GM10248 (cell line): ENCODE measurements at regions of chr4 and their contacts with region 1.

Region 1: GRCh38 chr4:1266881-1267763 is 18.2 kb upstream of the CTBP1 start:
- DNase-seq: no peak
- CTCF ChIP-seq: no peak

Region 2: GRCh38 chr4:1055721-1056590 is 211.2 kb before region 1 on chr4:
- CTCF ChIA-PET with region 1: no interaction called
- POLR2A ChIA-PET with region 1: no interaction called
- DNase-seq: peak; percentile 68
- CTCF ChIP-seq: no peak

Region 3: DNA sequence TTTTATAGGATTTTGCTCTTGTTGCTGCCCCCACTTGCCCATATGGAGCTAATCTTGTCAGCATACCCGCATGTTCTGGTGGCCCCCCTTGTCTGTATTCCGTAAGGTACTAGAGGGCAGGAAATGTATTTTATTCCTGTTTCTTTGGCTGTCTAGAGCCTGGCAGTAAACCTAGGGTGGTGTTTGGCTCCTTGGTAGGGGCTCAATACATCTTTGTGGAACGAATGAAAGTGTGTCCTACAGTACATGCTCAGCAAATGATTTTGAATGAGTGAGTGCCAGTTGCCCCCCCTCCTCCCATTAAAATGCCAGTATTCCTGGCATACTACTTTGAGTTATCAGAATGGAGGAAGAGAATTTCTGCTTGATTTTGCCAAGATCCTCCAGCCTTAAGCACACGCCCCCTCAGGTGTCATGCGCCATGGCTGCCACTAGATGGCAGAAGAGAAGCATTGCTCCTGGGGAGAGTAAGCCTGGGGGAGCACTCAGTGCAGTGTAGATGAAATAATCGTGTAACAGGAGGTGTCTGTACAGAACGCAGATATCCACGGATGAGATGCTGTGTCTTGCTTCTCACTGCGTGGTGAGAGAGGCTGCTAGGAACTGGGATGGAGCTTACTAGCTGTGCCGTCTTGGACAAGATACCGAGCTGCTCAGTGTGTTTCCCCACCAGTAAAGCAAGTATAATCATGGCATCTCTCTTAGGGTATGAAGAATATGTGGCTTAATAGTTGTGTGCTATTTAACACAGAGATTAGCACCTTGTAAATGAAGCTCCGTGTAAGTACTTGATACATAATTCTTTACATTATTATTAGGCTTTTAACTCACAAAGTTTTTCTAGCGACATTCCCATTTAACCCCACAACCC is 136.6 kb before region 1 on chr4:
- CTCF ChIA-PET with region 1: interaction called, 45 read pairs
- POLR2A ChIA-PET with region 1: no interaction called
- DNase-seq: peak; percentile 76
- CTCF ChIP-seq: peak; percentile 99

Region 4: GRCh38 chr4:1167247-1167949 is 99.7 kb before region 1 on chr4:
- CTCF ChIA-PET with region 1: interaction called, 30 read pairs
- POLR2A ChIA-PET with region 1: no interaction called
- DNase-seq: peak; percentile 89
- CTCF ChIP-seq: peak; percentile 87

Region 5: DNA sequence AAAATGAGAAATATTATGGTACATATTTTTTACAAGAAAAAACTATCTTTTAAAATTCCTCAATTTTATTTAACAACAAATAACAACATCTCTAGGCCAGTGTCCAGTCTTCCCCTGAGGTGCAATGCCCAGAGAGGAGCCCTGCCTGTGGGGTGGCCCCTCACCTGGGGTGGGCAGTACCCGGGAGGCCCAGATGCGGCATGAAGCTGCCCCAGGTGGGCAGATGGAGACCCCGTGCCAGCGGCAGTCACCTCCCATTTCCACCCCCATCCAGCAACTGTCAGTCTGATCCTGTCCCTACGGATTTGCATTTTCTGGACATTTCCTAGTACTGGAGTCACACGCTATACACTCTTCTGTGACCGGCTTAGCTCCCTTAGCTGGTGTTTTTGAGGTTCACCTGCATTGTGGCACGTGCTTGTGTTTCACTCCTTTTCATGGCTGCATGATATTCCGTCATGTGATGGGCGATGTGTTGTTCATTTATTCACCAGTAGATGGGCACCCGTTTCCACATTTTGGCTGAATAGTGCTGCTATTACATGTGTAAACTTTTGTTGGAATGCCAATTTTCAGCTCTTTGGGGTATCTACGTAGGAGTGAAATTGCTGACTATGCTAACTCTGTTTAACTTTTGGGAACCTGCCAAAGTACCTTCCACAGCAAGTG is 10.7 kb after region 1 on chr4:
- CTCF ChIA-PET with region 1: interaction called, 14 read pairs
- POLR2A ChIA-PET with region 1: interaction called, 3 read pairs
- DNase-seq: no peak
- CTCF ChIP-seq: no peak

Region 6: DNA sequence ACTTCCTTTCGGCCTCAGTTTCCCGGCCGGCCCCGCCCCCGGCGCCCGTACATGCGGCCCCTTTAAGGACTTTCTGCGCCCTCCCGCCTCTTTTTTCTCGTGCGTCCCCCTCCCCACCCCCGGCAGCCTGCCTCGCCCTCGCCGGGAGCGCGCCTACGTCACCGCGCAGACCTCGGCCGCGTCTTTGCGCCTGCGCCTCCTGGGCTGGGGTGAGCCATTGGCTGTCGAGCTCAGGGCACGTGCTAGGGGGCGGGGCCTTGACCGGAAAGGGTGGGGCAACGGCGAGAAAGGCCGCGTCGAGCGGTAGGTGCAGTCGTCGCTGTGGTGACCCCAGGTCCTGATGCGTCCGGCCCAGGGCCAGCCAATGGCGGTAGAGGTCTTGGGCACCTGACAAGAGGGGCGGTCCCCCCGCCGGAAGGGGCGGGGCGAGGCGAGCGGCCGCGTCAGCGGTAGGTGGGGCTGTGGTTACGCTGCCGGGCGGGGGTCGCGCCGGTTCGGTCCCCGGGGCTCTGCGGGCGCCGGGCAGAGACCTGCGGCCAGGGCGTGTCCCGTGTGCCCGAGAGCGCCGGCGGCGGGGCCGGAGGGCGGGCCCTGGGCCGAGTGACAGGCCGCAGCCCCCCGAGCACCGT is 79.8 kb after region 1 on chr4 and contains the start of gene UVSSA:
- CTCF ChIA-PET with region 1: interaction called, 12 read pairs
- POLR2A ChIA-PET with region 1: no interaction called
- DNase-seq: peak; percentile 100
- CTCF ChIP-seq: no peak

Region 7: GRCh38 chr4:1381944-1382541 is 114.9 kb after region 1 on chr4:
- CTCF ChIA-PET with region 1: no interaction called
- POLR2A ChIA-PET with region 1: no interaction called
- DNase-seq: no peak
- CTCF ChIP-seq: no peak